ENCODE measurements at regions of chr11 and their contacts with region 1.

Region 1: DNA sequence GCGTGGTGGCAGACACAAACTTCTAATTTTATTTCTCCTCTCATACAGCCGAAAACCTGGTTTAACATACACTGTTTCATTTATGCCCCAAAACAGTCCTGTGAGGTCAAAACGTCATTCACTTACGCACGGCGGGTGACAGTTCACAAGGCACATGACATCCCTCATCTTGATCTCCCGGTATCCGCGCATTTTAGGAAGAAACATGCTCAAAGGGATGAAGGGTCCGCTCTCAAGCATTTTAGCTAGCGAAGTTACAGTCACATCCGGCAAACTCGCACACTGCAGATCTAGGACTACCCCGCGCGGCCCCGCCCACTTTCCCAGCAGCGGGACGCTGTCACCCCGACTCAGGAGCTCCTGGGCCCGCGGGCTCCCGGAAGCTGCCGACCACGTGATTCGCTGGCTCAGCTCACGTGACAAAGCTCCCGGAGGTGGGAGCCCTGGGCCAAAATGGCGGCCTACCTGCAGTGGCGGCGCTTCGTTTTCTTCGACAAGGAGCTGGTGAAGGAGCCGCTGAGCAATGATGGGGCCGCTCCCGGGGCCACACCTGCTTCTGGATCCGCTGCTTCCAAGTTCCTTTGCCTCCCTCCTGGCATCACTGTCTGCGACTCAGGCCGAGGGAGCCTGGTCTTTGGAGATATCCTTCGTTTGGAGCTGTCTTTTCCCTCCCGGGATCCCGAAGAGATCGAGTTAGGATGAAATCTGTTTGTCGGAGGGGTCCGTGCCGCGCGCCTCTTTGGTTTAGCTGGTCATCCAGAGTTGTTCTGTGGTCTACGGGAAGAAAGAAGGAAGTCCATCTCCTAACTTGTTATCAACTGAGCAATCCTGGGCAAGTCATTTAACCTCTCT is at the start of gene VPS11:
- DNase-seq: peak; percentile 93 to 98 (median 97)
- ATAC-seq: peak; percentile 93 to 96
- H3K4me3 Mint-ChIP-seq: peak within 1 kb of the TSS; percentile 88 to 100 (median 96)
- H3K27ac Mint-ChIP-seq: peak within 1 kb of the TSS; percentile 96 to 100 (median 99)
- H3K4me1 Mint-ChIP-seq: peaks cover 15 to 60% (median 39%) of the 10 kb centered on the region in 4 donors
- H3K27me3 Mint-ChIP-seq: no peaks in the 10 kb centered on the region
- polyA plus RNA-seq, gene VPS11: 43.2 to 58.4 (median 44.8) TPM

Region 2: GRCh38 chr11:119018074-119018938 is 49.3 kb before region 1 on chr11 and contains the starts of genes RPS25 and TRAPPC4:
- POLR2A ChIA-PET with region 1: interaction called, 28 read pairs
- DNase-seq: peak; percentile 93 to 98 (median 94)
- ATAC-seq: peak; percentile 85 to 86
- H3K4me3 Mint-ChIP-seq: peak within 1 kb of the TSS; percentile 97 to 100 (median 98)
- H3K27ac Mint-ChIP-seq: peak within 1 kb of the TSS; percentile 98 to 100 (median 100)
- H3K4me1 Mint-ChIP-seq: peaks cover 16 to 69% (median 56%) of the 10 kb centered on the region in 4 donors
- H3K27me3 Mint-ChIP-seq: no peaks in the 10 kb centered on the region
- polyA plus RNA-seq, gene RPS25: 5,252 to 6,742 (median 6,279) TPM
- polyA plus RNA-seq, gene TRAPPC4: 73.0 to 97.6 (median 86.1) TPM

Region 3: GRCh38 chr11:119084663-119085436 is 17.3 kb after region 1 on chr11 and contains the start of gene HMBS:
- POLR2A ChIA-PET with region 1: interaction called, 27 read pairs
- DNase-seq: peak; percentile 79 to 97 (median 90)
- ATAC-seq: peak; percentile 89 to 95
- H3K4me3 Mint-ChIP-seq: peak within 1 kb of the TSS; percentile 87 to 97 (median 94)
- H3K27ac Mint-ChIP-seq: peak within 1 kb of the TSS; percentile 90 to 97 (median 96)
- H3K4me1 Mint-ChIP-seq: peaks cover 5 to 34% (median 25%) of the 10 kb centered on the region in 4 donors
- H3K27me3 Mint-ChIP-seq: no peaks in the 10 kb centered on the region
- polyA plus RNA-seq, gene HMBS: 20.0 to 32.7 (median 24.3) TPM

Region 4: DNA sequence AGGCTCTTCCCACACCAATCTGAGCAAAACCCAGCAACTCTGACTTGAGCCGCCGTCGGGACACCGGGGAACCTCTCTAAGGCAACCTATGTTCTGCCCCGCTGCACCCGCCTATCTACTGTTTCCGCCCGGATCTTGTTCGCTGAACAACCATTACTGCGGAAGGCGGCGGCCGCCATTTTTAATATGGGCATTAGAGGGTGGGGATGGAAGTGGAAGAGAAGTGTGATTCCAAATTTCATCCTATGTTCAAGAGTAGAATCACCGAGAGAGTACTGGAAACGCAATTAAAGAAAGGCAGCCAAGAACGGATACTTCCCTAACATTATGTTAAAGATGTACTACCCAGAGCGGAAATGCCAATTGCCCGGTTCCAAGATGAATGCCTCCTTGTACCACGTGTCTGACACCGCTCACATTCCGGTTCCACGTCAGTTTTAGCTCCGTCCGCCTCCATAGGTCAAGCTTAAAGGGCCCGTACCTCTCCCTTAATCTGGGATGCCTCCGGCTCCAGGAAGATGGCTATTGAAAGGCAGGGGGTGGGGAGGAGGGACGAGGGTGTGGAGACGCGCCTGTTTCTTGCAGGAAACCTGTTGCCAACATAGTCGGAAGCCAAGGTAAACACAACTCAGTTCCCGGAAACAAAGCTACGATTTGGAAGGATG is 34.3 kb after region 1 on chr11 and contains the start of gene DPAGT1:
- POLR2A ChIA-PET with region 1: interaction called, 29 read pairs
- DNase-seq: peak; percentile 66 to 92 (median 80)
- ATAC-seq: peak; percentile 86 to 87
- H3K4me3 Mint-ChIP-seq: peak within 1 kb of the TSS; percentile 91 to 99 (median 97)
- H3K27ac Mint-ChIP-seq: peak within 1 kb of the TSS; percentile 96 to 100 (median 100)
- H3K4me1 Mint-ChIP-seq: peaks cover 18 to 59% (median 47%) of the 10 kb centered on the region in 4 donors
- H3K27me3 Mint-ChIP-seq: no peaks in the 10 kb centered on the region
- polyA plus RNA-seq, gene DPAGT1: 28.7 to 30.8 (median 29.0) TPM

Region 5: DNA sequence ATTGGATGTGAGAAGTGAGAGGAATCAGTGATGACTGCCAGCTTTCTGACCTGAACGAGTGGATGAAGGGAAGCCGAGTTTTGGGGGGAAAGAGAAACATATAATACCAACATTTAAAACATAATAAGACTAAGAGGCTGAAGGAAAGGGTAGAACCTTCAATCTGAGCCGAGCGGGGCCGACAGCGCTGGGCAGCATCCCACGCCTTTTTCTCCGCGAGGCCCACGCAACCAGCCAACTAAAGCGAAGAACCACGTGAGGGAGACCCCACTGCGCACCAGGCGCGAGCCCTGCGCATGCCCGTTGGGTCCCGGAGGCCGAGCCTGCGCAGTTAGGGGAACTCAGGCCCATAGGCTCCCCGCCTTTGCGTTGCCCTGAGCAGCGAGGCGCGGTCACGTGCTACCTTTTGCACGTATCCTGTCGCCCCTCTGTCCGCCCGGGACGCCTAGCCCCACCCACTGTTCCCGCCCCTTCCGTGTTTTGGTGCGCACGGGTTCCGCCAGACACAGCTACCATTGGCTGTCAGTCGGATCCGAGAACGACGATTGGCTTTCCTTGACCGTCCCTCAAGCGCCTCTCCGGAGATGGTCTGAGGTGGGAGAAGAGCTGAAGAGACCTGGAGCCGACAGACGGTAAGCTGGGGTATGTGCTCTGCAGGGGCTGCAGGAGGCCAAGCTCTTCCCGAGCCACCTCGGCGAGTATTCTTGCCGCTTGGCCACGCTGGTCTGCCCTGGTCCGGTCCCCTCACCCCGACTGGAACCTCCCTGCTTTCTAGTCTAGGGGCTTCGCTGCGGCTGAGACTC is 53.6 kb after region 1 on chr11 and contains the start of gene HINFP:
- POLR2A ChIA-PET with region 1: interaction called, 17 read pairs
- DNase-seq: peak; percentile 94 to 100 (median 99)
- ATAC-seq: peak; percentile 94 to 97
- H3K4me3 Mint-ChIP-seq: peak within 1 kb of the TSS; percentile 84 to 99 (median 92)
- H3K27ac Mint-ChIP-seq: peak within 1 kb of the TSS; percentile 95 to 98 (median 96)
- H3K4me1 Mint-ChIP-seq: peaks cover 26 to 46% (median 43%) of the 10 kb centered on the region in 4 donors
- H3K27me3 Mint-ChIP-seq: no peaks in the 10 kb centered on the region
- polyA plus RNA-seq, gene HINFP: 7.3 to 24.9 (median 7.5) TPM

Region 6: DNA sequence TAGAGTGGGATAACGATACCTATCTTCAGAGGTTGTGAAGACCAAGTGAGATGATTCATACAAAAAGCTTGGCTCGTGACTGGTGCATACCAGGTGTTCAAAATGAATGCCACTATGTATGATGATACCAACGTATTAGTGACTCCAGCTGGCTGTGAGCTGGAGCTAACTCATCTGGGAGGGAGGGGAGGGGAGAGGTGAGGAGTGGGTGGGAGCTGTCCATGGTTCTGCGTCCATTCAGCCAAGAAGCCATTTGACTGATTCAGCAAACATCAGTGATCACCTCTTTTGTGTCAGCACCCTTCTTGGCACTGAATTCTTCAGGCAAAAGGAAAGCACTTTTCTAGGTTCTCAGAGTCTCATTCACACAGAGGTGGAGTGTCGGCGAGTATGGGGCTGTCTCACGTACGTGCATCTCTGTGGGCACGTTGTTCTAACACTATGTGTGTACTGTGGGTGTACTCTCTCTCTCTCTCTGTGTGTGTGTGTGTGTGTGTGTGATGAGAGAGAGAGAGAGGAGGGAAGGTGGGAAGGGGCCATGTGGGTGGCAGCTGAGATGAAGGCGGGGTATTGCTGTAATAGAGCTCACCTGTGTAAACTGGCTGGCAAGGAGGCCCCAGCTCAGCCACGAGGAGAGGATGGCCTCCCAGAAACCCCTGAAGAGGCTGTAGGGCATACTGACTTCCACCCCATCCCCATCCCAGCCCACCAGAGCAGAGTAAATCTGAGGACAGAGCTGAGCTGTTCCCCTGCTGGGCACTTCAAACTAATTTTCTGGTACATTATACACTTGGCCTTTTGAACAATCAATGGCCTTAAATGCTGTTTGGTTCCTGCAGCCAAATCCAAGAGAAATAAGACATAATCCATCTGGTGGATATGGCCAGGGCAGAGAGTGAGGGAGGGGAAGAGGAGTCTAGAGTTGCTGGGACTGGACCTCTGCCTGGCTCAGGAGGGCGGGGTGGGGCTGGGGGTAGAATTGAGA is 451.4 kb after region 1 on chr11:
- POLR2A ChIA-PET with region 1: no interaction called
- DNase-seq: no peak
- ATAC-seq: no peak
- H3K4me3 Mint-ChIP-seq: no peak overlapping the region
- H3K27ac Mint-ChIP-seq: no peak overlapping the region
- H3K4me1 Mint-ChIP-seq: peaks cover 0 to 1% (median 0%) of the 10 kb centered on the region in 4 donors
- H3K27me3 Mint-ChIP-seq: peaks cover 0 to 21% (median 5%) of the 10 kb centered on the region in 5 donors